Prostate gland (tissue), 2 donors: ENCODE measurements at regions of chr1 and their contacts with region 1.

Region 1: DNA sequence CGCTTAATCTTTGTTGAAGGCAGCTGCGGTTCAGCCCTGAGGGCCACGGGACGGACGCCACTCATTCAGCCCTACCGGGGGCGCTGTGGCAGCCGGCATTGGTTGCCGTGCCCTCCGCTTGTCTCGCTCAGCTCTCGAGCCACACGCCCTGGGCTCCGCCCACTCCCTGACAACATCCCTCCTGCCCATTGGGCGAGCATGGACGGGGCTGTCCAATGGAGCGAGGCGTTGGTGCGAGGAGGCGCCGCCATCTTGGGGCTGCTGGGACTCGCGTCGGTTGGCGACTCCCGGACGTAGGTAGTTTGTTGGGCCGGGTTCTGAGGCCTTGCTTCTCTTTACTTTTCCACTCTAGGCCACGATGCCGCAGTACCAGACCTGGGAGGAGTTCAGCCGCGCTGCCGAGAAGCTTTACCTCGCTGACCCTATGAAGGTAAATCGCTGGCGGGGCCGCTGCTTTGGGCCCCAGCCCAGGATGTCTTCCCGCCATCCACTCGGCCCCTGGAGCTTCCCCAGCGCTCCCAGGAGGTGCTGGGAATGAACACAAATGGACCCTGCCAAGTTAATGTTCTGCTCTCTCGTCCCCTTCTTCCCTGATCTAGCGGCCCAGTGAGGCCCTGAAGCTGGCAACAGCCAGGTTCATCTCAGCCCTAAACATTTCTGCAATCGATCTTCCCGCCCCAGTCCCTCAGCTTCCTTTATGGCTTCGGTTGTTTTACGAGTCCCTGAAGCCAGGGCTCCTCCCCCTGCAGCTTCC is at the start of gene SRP9:
- DNase-seq: peak; percentile 98
- H3K4me3 ChIP-seq: peak within 1 kb of the TSS; percentile 65 to 70
- H3K27ac ChIP-seq: peak within 1 kb of the TSS; percentile 92 to 96
- H3K4me1 ChIP-seq: peaks cover 10% of the 10 kb centered on the region
- H3K27me3 ChIP-seq: no peaks in the 10 kb centered on the region
- CTCF ChIP-seq: peak; percentile 81 to 96 (median 90)
- POLR2A ChIP-seq: peak; percentile 69
- total RNA-seq, gene SRP9: 168 to 324 TPM

Region 2: DNA sequence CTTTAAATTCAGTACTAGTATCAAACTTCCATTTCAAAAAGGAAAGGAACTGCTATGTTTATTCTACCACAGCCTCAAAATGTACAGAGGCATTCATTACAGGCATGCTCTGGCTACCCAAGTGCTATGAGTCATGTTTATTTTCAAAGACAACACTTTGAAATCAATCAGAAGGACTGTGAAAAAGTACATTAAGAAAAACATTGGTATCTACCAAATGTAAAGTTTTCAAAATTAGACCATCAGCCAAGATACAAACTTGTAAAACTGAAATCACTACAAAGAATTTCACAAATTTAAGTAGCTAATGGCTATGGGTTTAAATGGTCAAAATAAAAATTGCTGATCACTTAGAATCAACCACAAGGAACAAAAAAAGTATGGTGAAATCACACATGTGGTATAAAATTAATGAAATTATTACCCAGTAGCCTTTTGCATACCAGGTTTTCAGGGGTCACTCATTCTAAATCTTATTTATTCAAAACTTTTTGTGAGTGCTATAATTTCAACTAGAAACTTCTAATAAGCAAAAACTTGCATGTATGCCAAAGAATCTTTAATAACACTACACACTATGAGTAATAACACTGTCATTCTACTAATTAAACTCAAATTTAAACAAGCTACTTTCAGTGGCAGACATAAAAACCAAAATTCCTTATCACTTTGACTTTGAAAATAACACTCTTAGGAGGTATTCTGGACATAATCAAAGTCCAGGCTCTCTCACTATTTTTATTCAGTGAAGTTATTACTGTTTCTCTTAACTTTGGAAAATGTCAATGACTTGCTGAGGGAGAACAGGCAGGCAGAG is 174.0 kb before region 1 on chr1:
- intact Hi-C with region 1: no loop called
- DNase-seq: no peak
- H3K4me3 ChIP-seq: no peak overlapping the region
- H3K27ac ChIP-seq: peak overlapping the region in 1 of 2 donors; percentile 42
- H3K4me1 ChIP-seq: no peaks in the 10 kb centered on the region
- H3K27me3 ChIP-seq: no peaks in the 10 kb centered on the region
- CTCF ChIP-seq: no peak
- POLR2A ChIP-seq: no peak

Region 3: DNA sequence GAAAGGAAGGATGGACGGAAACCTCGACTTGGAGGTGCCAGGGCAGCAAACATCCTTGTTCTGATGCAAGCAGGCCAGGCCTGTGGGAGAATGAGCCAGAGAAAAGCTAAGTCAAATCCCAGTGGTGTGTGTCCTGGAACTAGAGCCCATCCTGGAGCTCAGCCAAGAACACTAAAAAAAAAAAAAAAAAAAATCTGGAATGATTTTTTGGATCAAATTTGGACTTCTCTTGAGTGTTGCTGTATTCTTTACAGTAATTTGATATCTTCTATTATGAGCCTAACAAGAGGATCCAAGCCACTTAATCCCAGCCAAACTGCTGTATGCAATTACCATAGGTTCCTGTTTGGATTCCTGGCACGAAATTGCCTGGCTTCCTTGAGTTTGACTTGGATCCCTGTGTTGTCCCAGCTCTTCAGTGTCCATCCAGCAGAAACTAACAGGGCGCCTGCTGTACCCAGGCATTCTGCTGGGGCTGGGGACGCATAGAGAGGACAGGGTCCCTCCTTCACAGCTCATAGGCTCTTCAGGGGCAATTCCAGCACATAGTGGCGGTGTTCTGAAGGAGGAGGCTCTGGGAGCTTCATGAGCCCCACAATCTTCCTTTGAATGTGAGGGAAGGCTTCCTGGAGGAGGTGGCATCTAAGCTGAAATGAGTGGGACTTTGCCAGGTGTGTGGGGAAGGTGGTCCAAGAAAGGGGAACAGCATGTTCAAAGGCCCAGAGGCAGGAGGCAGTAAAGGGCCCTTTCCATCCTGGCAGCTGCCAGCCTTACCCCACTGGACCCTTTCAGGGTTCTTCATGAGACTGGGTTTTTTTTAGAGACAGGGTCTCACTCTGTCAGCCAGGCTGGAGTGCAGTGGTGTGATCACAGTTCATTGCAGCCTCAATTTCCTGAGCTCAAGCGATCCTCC is 56.9 kb after region 1 on chr1:
- intact Hi-C with region 1: no loop called
- DNase-seq: peak; percentile 83
- H3K4me3 ChIP-seq: no peak overlapping the region
- H3K27ac ChIP-seq: peak overlapping the region; percentile 62 to 71
- H3K4me1 ChIP-seq: peaks cover 7% of the 10 kb centered on the region
- H3K27me3 ChIP-seq: no peaks in the 10 kb centered on the region
- CTCF ChIP-seq: no peak
- POLR2A ChIP-seq: no peak

Region 4: GRCh38 chr1:225911191-225912130 is 133.7 kb after region 1 on chr1:
- intact Hi-C with region 1: loop called (anchors 5 kb)
- DNase-seq: peak; percentile 35
- H3K4me3 ChIP-seq: no peak overlapping the region
- H3K27ac ChIP-seq: no peak overlapping the region
- H3K4me1 ChIP-seq: no peaks in the 10 kb centered on the region
- H3K27me3 ChIP-seq: no peaks in the 10 kb centered on the region
- CTCF ChIP-seq: peak; percentile 74 to 90 (median 89)
- POLR2A ChIP-seq: no peak